Activated T-helper 1 cell treated with anti-CD3 and anti-CD28 coated beads, Interleukin-12 subunit alpha, Interleukin-12 subunit beta, Interleukin-2, Interleukin-4 antibody, amounts not matched to agents 30 ng/mL and 10 ng/mL and 1 ng/mL, durations not matched to agents 14 hours and 24 hours and 36 hours (primary cell): ENCODE measurements at regions of chr4 and their contacts with region 1.

Region 1: GRCh38 chr4:108109997-108110416 is 58.7 kb downstream of the LEF1 start:
- DNase-seq: no peak
- H3K4me3 Mint-ChIP-seq: peak overlapping the region; percentile 37
- H3K27ac Mint-ChIP-seq: peak overlapping the region; percentile 67
- H3K4me1 Mint-ChIP-seq: peaks cover 95% of the 10 kb centered on the region
- H3K27me3 Mint-ChIP-seq: no peaks in the 10 kb centered on the region

Region 2: DNA sequence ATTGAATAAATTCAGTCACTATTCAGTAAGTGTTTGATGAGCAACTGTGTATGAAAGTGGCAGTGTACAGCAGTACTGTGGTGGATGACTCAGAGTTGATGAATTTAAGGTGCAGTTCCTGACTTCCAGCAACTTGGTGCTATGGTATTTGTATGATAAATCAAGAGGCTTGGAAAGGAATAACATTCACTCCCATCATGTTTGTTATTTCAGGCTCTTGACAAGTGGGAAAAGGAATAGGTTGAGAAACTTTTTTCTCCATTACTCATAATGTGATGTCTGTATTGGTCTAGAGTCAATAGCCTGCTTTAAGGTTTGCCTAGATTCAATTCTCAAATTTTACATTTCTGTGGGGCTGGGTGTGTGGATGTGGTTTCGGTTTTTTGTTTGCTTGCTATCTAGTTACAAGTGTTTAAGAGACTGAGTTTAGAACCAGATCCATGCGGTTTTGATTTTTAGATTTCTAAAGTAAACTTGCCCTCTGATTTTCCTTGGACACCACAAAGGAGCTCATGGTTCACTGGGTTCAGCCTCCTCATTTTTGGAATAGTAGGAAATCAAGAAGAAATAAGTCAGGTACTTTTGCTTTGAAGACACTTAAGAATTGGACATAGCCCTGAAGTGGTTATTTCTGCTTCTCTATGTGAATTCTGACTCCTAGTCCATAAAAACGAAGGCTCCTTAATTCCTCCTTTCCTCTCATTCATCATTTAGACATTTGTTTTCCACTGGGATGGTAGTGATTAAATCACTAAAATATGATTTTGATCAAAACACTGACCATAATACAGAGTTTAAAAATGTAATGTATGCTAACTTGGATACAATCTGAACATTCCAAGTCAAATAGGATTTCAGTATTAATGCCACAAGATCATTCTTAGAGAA is 213.6 kb before region 1 on chr4:
- intact Hi-C with region 1: no loop called
- DNase-seq: no peak
- H3K4me3 Mint-ChIP-seq: no peak overlapping the region
- H3K27ac Mint-ChIP-seq: no peak overlapping the region
- H3K4me1 Mint-ChIP-seq: peaks cover 7% of the 10 kb centered on the region
- H3K27me3 Mint-ChIP-seq: peaks cover 3% of the 10 kb centered on the region

Region 3: GRCh38 chr4:108053251-108053711 is 56.7 kb before region 1 on chr4:
- intact Hi-C with region 1: loop called (anchors 1 kb)
- DNase-seq: no peak
- H3K4me3 Mint-ChIP-seq: peak overlapping the region; percentile 52
- H3K27ac Mint-ChIP-seq: peak overlapping the region; percentile 85
- H3K4me1 Mint-ChIP-seq: peaks cover 82% of the 10 kb centered on the region
- H3K27me3 Mint-ChIP-seq: no peaks in the 10 kb centered on the region

Region 4: DNA sequence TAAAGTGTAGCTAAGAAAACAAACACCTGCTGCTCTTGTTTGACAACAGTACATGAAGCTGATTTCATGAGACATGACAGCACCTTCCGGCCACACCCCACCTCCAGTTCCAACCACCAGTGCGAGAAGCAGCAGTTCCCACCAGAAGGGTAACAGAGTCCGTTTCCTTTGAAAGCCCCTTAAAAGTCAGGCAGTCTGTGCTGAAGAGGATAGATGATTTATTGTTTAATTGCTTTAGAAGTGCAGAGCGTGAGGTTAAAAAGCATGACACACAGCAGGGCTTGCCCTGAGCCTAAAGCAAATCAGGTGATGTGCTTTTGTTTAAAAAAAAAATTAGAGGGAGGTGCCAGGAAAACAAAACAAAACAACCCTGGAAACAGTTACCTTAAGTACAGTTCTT is 37.7 kb before region 1 on chr4:
- intact Hi-C with region 1: loop called (anchors 5 kb)
- DNase-seq: peak; percentile 58
- H3K4me3 Mint-ChIP-seq: peak overlapping the region; percentile 50
- H3K27ac Mint-ChIP-seq: peak overlapping the region; percentile 81
- H3K4me1 Mint-ChIP-seq: peaks cover 73% of the 10 kb centered on the region
- H3K27me3 Mint-ChIP-seq: no peaks in the 10 kb centered on the region

Region 5: GRCh38 chr4:108087293-108087967 is 22.6 kb before region 1 on chr4:
- intact Hi-C with region 1: loop called (anchors 2 kb)
- DNase-seq: no peak
- H3K4me3 Mint-ChIP-seq: no peak overlapping the region
- H3K27ac Mint-ChIP-seq: no peak overlapping the region
- H3K4me1 Mint-ChIP-seq: peaks cover 45% of the 10 kb centered on the region
- H3K27me3 Mint-ChIP-seq: no peaks in the 10 kb centered on the region

Region 6: GRCh38 chr4:108135549-108136209 is 25.7 kb after region 1 on chr4:
- intact Hi-C with region 1: loop called (anchors 1 kb)
- DNase-seq: no peak
- H3K4me3 Mint-ChIP-seq: peak overlapping the region; percentile 56
- H3K27ac Mint-ChIP-seq: peak overlapping the region; percentile 87
- H3K4me1 Mint-ChIP-seq: peaks cover 75% of the 10 kb centered on the region
- H3K27me3 Mint-ChIP-seq: no peaks in the 10 kb centered on the region

Region 7: DNA sequence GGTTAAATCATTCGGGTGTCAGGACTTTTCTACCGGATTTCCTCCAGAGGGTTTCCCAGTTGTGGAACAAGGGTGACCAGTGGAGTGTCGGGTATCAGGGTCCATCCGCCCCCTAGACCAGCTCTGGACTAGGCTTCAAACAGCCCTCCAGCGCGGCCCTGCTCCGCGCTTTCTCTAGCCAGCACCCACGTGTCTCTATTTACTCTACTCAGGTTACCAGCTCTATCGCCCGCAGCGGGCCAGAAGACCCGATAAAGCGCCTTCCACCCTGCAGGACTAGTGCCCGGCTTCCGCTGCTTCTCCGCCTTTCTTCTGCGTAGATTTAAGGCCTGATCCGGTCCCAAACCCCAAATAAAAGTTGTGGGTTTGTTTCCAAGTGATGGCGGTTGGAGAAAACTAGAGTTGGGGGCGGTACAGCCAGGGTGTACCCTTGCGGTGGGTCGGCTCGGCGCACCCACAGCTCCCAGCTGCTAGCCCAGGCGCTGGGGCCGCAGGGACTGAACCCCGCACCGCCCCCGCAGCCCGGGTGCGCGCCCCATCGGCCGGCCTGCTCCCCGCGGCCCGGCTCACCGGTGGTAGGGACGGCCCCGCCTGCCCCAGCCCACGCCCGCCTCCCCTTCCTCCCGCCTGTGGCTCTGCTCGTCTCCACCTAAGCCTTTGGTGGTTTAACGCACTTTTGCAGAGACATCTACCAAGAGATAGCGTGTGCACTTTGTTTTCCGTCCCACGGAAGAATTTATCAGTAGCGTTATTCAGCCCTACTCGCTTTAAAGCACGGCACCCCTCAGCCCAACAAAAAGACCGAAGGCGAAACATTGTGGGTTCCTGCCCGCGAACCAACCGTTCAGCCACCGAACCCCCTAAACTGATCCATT is 56.7 kb after region 1 on chr4:
- intact Hi-C with region 1: loop called (anchors 1 kb)
- DNase-seq: peak; percentile 68
- H3K4me3 Mint-ChIP-seq: peak overlapping the region; percentile 98
- H3K27ac Mint-ChIP-seq: peak overlapping the region; percentile 98
- H3K4me1 Mint-ChIP-seq: peaks cover 68% of the 10 kb centered on the region
- H3K27me3 Mint-ChIP-seq: peaks cover 12% of the 10 kb centered on the region

Region 8: GRCh38 chr4:108355186-108355901 is 245.3 kb after region 1 on chr4:
- intact Hi-C with region 1: loop called (anchors 5 kb)
- DNase-seq: peak; percentile 54
- H3K4me3 Mint-ChIP-seq: peak overlapping the region; percentile 76
- H3K27ac Mint-ChIP-seq: peak overlapping the region; percentile 30
- H3K4me1 Mint-ChIP-seq: peaks cover 74% of the 10 kb centered on the region
- H3K27me3 Mint-ChIP-seq: peaks cover 5% of the 10 kb centered on the region